Motor neuron (in vitro differentiated cells): ENCODE measurements at regions of chr3 and their contacts with region 1.

Region 1: DNA sequence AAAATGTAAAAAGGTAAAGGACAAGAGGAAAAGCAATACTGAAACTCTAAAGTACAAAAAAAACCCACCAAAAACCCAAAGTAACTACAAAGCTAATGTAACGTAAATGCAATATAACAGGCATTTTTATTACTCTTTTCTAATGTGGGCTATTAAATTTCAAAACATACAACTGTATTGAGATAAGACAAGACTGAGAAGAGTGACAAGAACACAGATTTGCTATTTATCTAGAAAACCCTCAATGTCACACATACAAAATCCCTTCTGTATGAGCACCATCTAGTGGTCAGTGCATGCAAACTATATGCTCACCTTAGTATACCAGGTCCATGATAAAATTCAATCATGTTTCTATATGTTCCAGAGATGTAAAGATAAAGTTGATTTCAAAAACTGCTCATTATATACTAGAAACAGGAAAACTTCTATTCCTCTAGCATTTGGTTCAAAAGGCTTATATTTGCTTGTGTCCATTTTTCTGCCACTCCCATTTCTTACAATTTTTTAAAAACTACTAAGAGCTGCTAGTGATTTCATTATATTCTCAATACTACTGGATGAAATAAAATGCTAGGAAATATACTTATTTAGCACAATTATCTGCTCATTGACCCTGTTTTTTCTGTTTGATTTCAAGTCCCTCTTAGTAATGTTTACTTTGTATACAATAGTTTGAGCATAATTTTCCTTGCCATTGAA is 111.4 kb downstream of the DLG1 start:
- ATAC-seq: peak; percentile 73 to 88 (median 84)
- H3K4me3 ChIP-seq: no peak overlapping the region
- H3K27ac ChIP-seq: no peak overlapping the region
- H3K4me1 ChIP-seq: peaks cover 7 to 11% of the 10 kb centered on the region in 2 donors

Region 2: DNA sequence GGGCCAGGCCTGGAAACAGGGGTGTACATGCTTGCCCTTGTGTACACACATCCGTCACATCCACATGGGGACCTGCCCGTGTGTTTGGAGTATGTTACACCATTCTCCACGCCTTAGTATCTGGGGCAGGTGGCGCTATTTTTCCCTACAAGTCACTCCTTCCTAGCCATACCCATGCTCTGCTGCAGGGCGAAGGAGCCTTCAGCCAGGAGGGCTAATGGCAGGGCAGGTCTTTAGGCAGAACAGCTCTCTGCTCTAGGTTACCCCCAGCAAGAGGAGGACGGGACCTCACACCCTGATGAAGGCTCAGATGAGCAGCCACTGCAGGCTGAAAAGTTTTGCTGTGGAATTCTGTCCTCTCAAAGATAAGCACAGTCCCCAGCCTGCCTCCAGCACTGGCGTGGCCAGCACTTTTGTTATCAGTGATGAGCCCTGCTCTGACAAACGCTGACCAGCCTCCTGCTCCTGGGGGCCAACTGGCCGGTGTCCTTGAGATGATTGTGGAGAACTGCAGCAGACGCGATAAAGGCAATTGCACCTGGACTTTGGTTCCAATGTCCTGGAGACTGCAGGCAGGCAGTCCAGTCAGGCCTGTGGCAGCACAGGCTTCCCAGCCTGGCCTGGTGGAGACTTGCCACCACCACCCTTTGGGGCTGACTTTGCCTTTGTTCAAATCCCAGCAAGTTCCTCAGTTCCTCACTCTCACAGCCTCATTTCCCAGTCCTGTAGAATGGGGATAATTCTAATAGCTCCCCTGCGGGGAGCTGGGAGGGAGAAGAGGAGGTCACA is 198.6 kb before region 1 on chr3:
- in situ Hi-C with region 1: loop called in 1 of 9 experiments (anchors 25 kb)
- ATAC-seq: peak in 6 of 8 experiments; percentile 32 to 74 (median 50)
- H3K4me3 ChIP-seq: no peak overlapping the region
- H3K27ac ChIP-seq: no peak overlapping the region
- H3K4me1 ChIP-seq: no peaks in the 10 kb centered on the region

Region 3: DNA sequence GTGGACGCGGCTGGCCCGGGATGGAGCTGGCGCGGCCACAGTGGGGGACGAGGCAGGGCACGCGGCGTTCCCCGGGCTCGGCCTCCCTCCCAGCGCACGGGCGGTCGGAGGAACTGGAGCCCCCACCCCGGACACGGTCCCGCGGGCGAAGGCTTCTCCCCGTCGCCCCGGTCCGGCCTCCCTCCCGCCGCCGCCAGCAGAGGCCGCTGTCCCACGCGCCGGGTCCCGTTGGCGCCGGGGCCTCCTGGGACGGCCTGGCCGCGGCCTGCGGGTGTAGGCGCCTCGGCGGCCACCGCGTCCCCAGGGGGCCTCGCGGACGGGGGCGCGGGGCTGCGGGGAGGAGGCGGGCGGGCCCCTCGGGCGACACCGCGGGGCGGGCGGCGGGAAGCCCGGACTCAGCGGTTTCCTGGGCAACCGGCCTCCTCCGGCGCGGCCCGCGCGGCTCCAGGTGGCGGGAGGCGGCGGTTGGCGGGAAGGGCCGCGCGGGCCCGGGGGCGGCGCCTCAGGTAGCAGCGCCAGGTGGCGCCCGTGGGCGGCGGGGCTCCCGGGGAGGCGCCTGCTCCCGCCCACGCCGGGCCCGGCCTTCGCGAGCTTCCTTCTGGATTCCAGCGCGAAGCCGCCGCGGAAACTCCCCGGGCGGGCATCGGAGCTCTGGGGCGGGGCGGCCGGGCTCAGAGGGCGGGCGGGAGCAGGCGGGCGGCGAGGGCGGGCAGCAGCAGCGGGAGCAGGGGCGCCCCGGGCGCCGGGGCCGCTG is 184.2 kb before region 1 on chr3:
- in situ Hi-C with region 1: loop called in 4 of 9 experiments (anchors 25 kb)
- ATAC-seq: peak; percentile 79 to 91 (median 84)
- H3K4me3 ChIP-seq: peak overlapping the region; percentile 38 to 59 (median 38)
- H3K27ac ChIP-seq: peak overlapping the region in 1 of 2 donors; percentile 60
- H3K4me1 ChIP-seq: peaks cover 7 to 17% of the 10 kb centered on the region in 2 donors